Astrocyte of the cerebellum (primary cell): ENCODE measurements at regions of chr11 and their contacts with region 1.

Region 1: DNA sequence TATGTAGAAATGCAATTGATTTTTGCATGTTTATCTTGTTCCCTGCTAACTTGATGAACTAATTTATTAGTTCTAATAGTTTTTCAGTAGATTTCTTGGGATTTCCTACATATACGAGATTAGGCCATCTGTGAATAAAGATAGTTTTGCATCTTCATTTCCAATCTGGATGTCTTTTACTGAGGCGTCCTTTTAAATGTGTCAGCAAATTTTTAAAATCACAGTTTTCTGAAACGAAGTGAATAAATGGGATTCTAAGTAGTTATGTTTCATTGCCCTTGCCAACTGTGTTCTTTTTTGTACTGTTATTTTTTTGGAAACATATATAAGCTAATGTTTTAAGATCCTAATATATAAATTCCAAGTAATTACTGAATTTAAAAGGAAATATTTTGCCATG is 50.0 kb downstream of the CYP2R1 start:
- DNase-seq: no peak
- H3K4me3 ChIP-seq: no peak overlapping the region
- CTCF ChIP-seq: no peak

Region 2: GRCh38 chr11:14773755-14774154 is 68.2 kb before region 1 on chr11:
- in situ Hi-C with region 1: no loop called
- DNase-seq: no peak
- H3K4me3 ChIP-seq: no peak overlapping the region
- CTCF ChIP-seq: peak; percentile 34

Region 3: DNA sequence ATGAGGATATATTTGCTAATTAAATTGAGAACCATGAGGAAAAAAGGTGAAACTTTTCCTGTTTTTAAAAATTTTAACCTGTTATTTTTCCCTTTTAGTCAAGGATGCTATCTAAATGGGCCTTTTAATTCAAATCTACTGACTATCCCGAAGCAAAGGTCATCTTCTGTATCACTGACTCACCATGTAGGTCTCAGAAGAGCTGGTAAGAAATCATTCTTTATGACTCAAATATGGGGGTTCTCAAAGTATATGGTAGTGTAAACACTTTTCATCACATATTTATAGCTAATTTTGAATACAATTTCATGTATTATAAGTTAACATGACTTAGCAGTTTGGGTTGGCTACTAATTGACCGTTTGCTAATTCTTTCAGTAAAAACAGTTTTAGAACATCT is 38.2 kb before region 1 on chr11:
- in situ Hi-C with region 1: loop called (anchors 5 kb)
- DNase-seq: no peak
- H3K4me3 ChIP-seq: no peak overlapping the region
- CTCF ChIP-seq: no peak